ENCODE measurements at regions of chr15 and their contacts with region 1.

Region 1: DNA sequence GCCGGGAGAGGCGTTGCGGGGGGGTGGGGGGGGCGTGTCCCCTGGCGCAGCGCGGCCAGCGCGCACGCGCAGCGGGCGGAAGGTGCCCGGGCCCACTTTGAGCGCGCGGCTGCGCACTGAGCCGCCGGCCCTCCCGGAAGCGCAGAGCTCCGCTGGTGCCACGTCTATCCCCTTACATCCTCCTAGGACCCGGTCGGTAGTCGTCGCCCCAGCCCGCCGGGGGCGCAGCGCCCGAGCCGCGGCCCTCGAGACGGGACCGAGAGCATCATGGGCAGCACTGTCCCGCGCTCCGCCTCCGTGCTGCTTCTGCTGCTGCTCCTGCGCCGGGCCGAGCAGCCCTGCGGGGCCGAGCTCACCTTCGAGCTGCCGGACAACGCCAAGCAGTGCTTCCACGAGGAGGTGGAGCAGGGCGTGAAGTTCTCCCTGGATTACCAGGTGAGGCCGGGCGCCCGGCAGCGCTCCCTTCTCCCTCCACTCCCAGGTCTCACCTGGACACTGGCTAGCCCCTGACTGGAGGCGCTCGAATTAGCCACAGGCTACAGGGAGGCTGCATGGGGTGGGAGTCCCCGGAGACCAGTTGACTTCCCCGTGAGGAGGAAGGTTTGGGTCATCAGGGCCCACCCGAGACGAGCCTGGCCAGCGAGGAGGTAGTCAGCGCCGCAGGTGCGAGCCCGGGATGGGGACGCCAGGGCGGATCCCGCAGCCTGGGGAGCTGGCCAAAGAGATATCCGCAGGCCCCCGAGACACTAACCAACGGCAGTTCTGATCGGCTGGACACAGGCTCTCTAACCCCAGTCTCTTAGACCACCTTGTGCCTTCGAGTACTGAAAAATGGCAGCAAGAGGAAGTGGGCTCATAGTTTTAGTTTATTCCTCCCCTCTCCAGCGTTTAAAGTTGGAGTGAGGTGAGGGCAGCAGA is at the start of gene TMED3:
- DNase-seq: peak; percentile 52 to 92 (median 74)
- ATAC-seq: peak; percentile 92
- H3K4me3 ChIP-seq: peak within 1 kb of the TSS; percentile 95
- H3K4me3 Mint-ChIP-seq: peak within 1 kb of the TSS; percentile 97
- H3K27ac ChIP-seq: no peak within 1 kb of the TSS
- H3K27ac Mint-ChIP-seq: no peak within 1 kb of the TSS
- H3K4me1 ChIP-seq: peaks cover 25% of the 10 kb centered on the region
- H3K4me1 Mint-ChIP-seq: peaks cover 43% of the 10 kb centered on the region
- H3K27me3 ChIP-seq: peaks cover 0 to 3% of the 10 kb centered on the region in 2 experiments
- H3K27me3 Mint-ChIP-seq: peaks cover 9% of the 10 kb centered on the region
- CTCF ChIP-seq: peak; percentile 24
- total RNA-seq, gene TMED3: 12.2 to 12.7 TPM

Region 2: DNA sequence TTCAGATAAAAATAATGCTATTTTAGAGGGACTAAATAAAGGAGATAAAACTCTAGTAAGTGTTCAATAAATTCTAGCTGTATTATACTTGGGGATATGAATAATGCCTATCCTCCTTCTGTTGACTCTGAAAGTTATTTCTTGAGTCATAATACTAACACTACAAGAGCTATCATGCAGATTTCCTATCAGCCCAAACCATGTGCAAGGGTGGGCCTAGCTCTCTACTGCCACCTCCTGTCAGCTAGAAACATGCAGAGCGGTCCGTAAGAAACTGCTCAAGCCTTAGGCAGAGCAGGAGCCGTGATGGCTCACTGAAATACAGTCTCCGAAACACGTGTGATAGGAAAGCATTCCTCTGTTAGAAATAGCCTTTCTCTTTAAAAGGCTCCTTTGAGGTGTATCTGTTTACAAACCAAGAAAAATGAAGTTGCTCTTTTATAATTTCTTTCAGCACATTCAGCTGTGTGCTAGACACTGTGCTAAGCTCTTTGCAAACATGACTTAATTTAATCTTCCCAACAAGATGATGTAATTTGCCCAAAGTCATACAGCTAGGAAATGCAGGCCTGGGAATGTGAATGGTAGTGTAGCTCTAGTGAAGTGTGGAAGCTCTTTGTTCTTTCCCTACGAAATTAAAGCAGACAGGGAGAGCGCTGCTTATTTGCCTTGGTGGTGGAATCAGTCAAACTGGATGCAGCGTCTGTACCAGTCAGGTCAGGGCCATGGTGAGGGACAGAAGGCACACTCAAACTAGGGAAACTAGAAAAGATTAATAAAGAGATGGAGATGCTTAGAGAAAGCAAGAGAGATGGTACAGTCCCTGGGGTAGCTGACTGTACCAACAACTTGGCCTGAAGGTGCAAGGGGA is 542.5 kb after region 1 on chr15:
- CTCF ChIA-PET with region 1: no interaction called
- POLR2A ChIA-PET with region 1: interaction called, 4 read pairs
- intact Hi-C with region 1: loop called in 1 of 2 experiments (anchors 10 kb)
- DNase-seq: peak; percentile 35 to 79 (median 46)
- ATAC-seq: peak; percentile 99
- H3K4me3 ChIP-seq: no peak overlapping the region
- H3K4me3 Mint-ChIP-seq: no peak overlapping the region
- H3K27ac ChIP-seq: no peak overlapping the region
- H3K27ac Mint-ChIP-seq: peak overlapping the region; percentile 22
- H3K4me1 ChIP-seq: no peaks in the 10 kb centered on the region
- H3K4me1 Mint-ChIP-seq: peaks cover 24% of the 10 kb centered on the region
- H3K27me3 ChIP-seq: no peaks in the 10 kb centered on the region
- H3K27me3 Mint-ChIP-seq: no peaks in the 10 kb centered on the region
- CTCF ChIP-seq: peak; percentile 98

Region 3: GRCh38 chr15:80152180-80152845 is 841.1 kb after region 1 on chr15:
- CTCF ChIA-PET with region 1: no interaction called
- POLR2A ChIA-PET with region 1: no interaction called
- intact Hi-C with region 1: loop called in 1 of 2 experiments (anchors 5 kb)
- DNase-seq: peak; percentile 79 to 98 (median 86)
- ATAC-seq: peak; percentile 72
- H3K4me3 ChIP-seq: peak overlapping the region; percentile 89
- H3K4me3 Mint-ChIP-seq: peak overlapping the region; percentile 89
- H3K27ac ChIP-seq: peak overlapping the region in 1 of 2 donors; percentile 47
- H3K27ac Mint-ChIP-seq: peak overlapping the region; percentile 74
- H3K4me1 ChIP-seq: peaks cover 21% of the 10 kb centered on the region
- H3K4me1 Mint-ChIP-seq: peaks cover 29% of the 10 kb centered on the region
- H3K27me3 ChIP-seq: no peaks in the 10 kb centered on the region
- H3K27me3 Mint-ChIP-seq: no peaks in the 10 kb centered on the region
- CTCF ChIP-seq: no peak

Measured in CD4-positive, alpha-beta T cell (primary cell).